Activated T-helper 1 cell treated with anti-CD3 and anti-CD28 coated beads, Interleukin-12 subunit alpha, Interleukin-12 subunit beta, Interleukin-2, Interleukin-4 antibody, amounts not matched to agents 30 ng/mL and 10 ng/mL and 1 ng/mL, durations not matched to agents 14 hours and 24 hours and 36 hours (primary cell): ENCODE measurements at regions of chr7 and their contacts with region 1.

Region 1: GRCh38 chr7:27160546-27161213 is 4.2 kb upstream of the HOXA7 start:
- DNase-seq: peak; percentile 63
- H3K4me3 Mint-ChIP-seq: peak overlapping the region; percentile 37
- H3K27ac Mint-ChIP-seq: no peak overlapping the region
- H3K4me1 Mint-ChIP-seq: peaks cover 11% of the 10 kb centered on the region
- H3K27me3 Mint-ChIP-seq: peaks cover 77% of the 10 kb centered on the region

Region 2: DNA sequence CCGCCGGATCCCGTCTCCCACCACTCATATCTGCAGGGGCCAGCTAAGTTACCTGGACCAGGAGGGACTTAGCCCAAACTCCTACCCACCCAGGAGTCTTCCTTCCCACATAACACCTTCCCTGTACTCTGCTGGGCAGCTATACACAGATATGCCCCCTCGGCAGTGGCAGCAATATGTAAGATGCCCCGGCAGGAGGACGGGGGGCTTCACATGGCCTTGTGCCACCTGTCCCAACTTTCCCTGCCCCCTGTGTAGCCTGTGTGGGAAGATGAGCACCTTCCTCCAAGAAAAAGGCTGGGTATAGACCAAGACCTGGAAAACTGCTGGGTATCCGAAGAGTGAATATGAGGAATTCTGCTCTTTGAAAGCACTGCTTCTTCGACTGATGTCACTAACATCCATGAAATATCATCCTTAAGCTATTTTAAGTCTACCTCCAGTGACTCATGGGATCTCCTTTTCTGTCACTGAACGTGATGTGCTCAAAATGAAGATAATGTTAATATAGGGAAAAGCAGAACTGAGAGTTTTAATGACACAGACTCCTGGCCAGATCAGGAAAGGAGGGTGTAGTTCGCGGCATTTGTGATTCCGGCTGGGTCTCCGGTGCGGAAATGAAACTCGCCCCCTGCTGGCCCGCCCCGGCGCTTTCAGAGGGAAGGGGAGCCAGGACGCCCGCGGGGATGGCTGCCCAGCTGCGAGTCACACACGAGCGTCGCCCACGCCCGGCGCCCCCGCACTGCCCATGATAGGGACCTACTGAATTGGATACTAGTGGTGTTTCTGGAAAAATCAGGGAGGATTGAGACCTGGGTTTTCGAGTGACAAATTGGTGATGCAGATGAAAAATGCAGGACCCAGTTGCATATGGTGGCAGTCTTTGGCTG is 1265.5 kb before region 1 on chr7:
- intact Hi-C with region 1: loop called (anchors 1 kb)
- DNase-seq: peak; percentile 51
- H3K4me3 Mint-ChIP-seq: peak overlapping the region; percentile 3
- H3K27ac Mint-ChIP-seq: no peak overlapping the region
- H3K4me1 Mint-ChIP-seq: peaks cover 33% of the 10 kb centered on the region
- H3K27me3 Mint-ChIP-seq: peaks cover 6% of the 10 kb centered on the region

Region 3: GRCh38 chr7:26686448-26686981 is 474.2 kb before region 1 on chr7:
- intact Hi-C with region 1: loop called (anchors 1 kb)
- DNase-seq: no peak
- H3K4me3 Mint-ChIP-seq: no peak overlapping the region
- H3K27ac Mint-ChIP-seq: no peak overlapping the region
- H3K4me1 Mint-ChIP-seq: no peaks in the 10 kb centered on the region
- H3K27me3 Mint-ChIP-seq: peaks cover 15% of the 10 kb centered on the region

Region 4: GRCh38 chr7:27095897-27096767 is 64.5 kb before region 1 on chr7 and contains the start of gene HOXA1:
- intact Hi-C with region 1: loop called (anchors 2 kb)
- DNase-seq: peak; percentile 48
- H3K4me3 Mint-ChIP-seq: peak within 1 kb of the TSS; percentile 85
- H3K27ac Mint-ChIP-seq: peak within 1 kb of the TSS; percentile 73
- H3K4me1 Mint-ChIP-seq: peaks cover 18% of the 10 kb centered on the region
- H3K27me3 Mint-ChIP-seq: peaks cover 76% of the 10 kb centered on the region
- total RNA-seq, gene HOXA1: 0.16 and 0.24 TPM in 2 replicates

Region 5: GRCh38 chr7:27143023-27143949 is 17.4 kb before region 1 on chr7 and contains the start of gene HOXA5:
- intact Hi-C with region 1: no loop called
- DNase-seq: no peak
- H3K4me3 Mint-ChIP-seq: no peak within 1 kb of the TSS
- H3K27ac Mint-ChIP-seq: no peak within 1 kb of the TSS
- H3K4me1 Mint-ChIP-seq: no peaks in the 10 kb centered on the region
- H3K27me3 Mint-ChIP-seq: peaks cover 38% of the 10 kb centered on the region
- total RNA-seq, gene HOXA5: not detected in 2 replicates

Region 6: DNA sequence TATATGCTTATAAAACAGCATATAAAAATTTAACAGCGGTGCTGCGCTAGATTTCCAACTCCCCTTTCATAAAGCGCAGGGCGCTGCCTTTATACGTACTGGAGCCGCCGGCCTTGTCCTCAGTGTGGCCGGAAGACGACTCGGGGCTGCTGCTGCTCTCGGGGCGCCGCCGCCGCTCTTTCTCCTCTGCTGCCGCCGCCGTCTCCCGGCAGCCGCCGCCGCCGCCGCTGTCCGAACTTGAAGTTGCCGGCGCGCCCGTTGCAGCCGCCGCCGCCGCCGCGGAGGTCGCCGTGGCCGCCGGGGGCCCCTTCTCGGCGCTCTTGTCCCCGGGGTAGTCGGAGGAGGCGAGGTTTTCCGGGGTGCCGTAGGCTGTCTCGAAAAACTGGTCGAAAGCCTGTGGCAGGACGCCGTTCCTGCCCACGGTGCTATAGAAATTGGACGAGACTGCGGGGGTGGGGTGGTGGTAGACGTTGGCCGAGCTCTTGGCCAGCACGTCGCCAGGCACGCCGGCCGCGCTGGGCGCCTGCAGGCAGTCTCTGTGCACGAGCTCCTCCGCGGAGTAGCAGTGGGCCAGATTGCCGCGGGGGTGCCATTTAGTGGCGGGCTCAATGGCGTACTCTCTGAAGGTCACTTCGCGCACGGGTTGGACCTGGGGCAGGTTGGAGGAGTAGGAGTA is 23.8 kb after region 1 on chr7:
- intact Hi-C with region 1: loop called (anchors 2 kb)
- DNase-seq: no peak
- H3K4me3 Mint-ChIP-seq: no peak overlapping the region
- H3K27ac Mint-ChIP-seq: peak overlapping the region; percentile 87
- H3K4me1 Mint-ChIP-seq: peaks cover 5% of the 10 kb centered on the region
- H3K27me3 Mint-ChIP-seq: peaks cover 81% of the 10 kb centered on the region

Region 7: DNA sequence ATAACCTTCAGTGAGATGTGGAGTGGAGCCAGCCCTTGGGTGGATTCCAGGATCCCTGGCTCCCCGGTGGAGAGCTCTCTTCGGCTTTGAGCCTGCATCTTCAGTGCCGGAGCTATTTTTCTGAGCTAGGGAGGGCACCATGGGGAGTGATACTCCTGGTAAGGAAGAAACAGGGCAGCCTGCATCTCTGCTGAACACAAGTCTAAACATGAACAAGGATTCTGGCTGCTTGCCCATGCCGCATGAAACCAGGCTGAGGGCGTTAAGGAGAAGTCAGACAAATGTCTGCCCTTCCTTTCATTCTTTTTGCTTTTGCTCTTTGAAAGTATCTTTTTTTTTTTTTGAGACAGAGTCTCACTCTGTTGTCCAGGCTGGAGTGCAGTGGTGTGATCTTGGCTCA is 142.3 kb after region 1 on chr7:
- intact Hi-C with region 1: no loop called
- DNase-seq: no peak
- H3K4me3 Mint-ChIP-seq: no peak overlapping the region
- H3K27ac Mint-ChIP-seq: no peak overlapping the region
- H3K4me1 Mint-ChIP-seq: no peaks in the 10 kb centered on the region
- H3K27me3 Mint-ChIP-seq: peaks cover 2% of the 10 kb centered on the region